Panc1 (cell line): ENCODE measurements at regions of chr22 and their contacts with region 1.

Region 1: DNA sequence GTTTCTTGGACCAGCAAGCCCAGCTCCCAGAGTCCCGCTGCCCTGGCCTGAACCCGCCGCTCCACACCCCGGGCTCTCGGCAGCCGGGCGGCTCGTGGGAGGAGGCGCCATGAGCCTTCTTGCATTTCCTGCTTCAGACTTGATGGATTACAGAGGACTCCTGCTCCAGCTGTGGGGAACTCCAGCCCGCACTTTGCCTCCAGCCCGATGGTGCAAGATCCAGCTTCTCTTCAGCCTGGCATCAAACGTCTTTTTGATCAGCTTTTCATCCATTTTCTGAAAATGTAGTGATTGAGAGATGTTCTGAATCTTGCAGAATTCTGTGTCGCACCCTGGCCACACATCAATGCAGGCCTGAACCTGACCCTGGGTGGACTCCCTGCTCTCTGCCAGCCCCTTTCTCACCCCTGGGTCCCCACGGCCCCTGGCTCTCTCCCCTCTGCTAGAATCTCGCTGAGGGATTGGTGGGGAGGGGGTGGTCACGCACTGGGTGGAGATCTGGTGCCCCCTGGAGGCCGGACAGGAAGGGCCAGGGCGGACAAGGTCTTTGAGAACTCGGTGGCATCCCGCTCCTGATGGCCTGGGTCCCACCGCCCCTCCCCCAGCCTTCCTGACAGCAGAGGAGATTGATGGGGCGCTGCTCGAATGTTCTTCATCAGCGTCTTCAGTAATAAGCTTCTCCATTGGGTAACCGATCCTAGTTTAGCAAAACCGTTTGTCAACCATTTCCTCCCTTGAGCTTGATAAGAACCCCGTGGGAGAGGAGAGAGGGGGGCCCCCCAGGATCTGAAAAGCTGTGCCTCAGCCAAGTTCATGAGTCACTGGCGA is 12.1 kb upstream of the NFAM1 start:
- DNase-seq: no peak
- ATAC-seq: peak; percentile 82
- H3K4me3 ChIP-seq: peak overlapping the region; percentile 23 to 46
- H3K27ac ChIP-seq: peak overlapping the region; percentile 51; the same call in 1 of the 2 replicates
- H3K4me1 ChIP-seq: peaks cover 20% of the 10 kb centered on the region
- H3K27me3 ChIP-seq: no peaks in the 10 kb centered on the region
- CTCF ChIP-seq: peak; percentile 89

Region 2: GRCh38 chr22:42079319-42080251 is 364.7 kb before region 1 on chr22 and contains the start of gene SMDT1:
- CTCF ChIA-PET with region 1: no interaction called
- POLR2A ChIA-PET with region 1: interaction called, 11 read pairs
- in situ Hi-C with region 1: no loop called
- intact Hi-C with region 1: no loop called
- DNase-seq: peak; percentile 87
- ATAC-seq: peak; percentile 95
- H3K4me3 ChIP-seq: peak within 1 kb of the TSS; percentile 62 to 82
- H3K27ac ChIP-seq: peak within 1 kb of the TSS; percentile 91
- H3K4me1 ChIP-seq: peaks cover 13% of the 10 kb centered on the region
- H3K27me3 ChIP-seq: no peaks in the 10 kb centered on the region
- CTCF ChIP-seq: no peak
- total RNA-seq, gene SMDT1: 44.6 TPM

Region 3: GRCh38 chr22:42090596-42091454 is 353.5 kb before region 1 on chr22 and contains the start of gene NDUFA6:
- CTCF ChIA-PET with region 1: interaction called, 12 read pairs
- POLR2A ChIA-PET with region 1: no interaction called
- in situ Hi-C with region 1: no loop called
- intact Hi-C with region 1: no loop called
- DNase-seq: peak; percentile 93
- ATAC-seq: peak; percentile 98
- H3K4me3 ChIP-seq: peak within 1 kb of the TSS; percentile 81 to 85
- H3K27ac ChIP-seq: peak within 1 kb of the TSS; percentile 90
- H3K4me1 ChIP-seq: no peaks in the 10 kb centered on the region
- H3K27me3 ChIP-seq: no peaks in the 10 kb centered on the region
- CTCF ChIP-seq: peak; percentile 96
- total RNA-seq, gene NDUFA6: 92.2 TPM

Region 4: GRCh38 chr22:42243802-42244060 is 200.6 kb before region 1 on chr22:
- CTCF ChIA-PET with region 1: no interaction called
- POLR2A ChIA-PET with region 1: no interaction called
- in situ Hi-C with region 1: no loop called
- intact Hi-C with region 1: no loop called
- DNase-seq: no peak
- ATAC-seq: no peak
- H3K4me3 ChIP-seq: no peak overlapping the region
- H3K27ac ChIP-seq: no peak overlapping the region
- H3K4me1 ChIP-seq: no peaks in the 10 kb centered on the region
- H3K27me3 ChIP-seq: no peaks in the 10 kb centered on the region
- CTCF ChIP-seq: no peak

Region 5: GRCh38 chr22:42473484-42474193 is 29.3 kb after region 1 on chr22:
- CTCF ChIA-PET with region 1: no interaction called
- POLR2A ChIA-PET with region 1: no interaction called
- in situ Hi-C with region 1: no loop called
- intact Hi-C with region 1: no loop called
- DNase-seq: peak; percentile 22
- ATAC-seq: peak; percentile 88
- H3K4me3 ChIP-seq: no peak overlapping the region
- H3K27ac ChIP-seq: no peak overlapping the region
- H3K4me1 ChIP-seq: no peaks in the 10 kb centered on the region
- H3K27me3 ChIP-seq: no peaks in the 10 kb centered on the region
- CTCF ChIP-seq: peak; percentile 73